Naive thymus-derived CD4-positive, alpha-beta T cell (primary cell): ENCODE measurements at regions of chr11 and their contacts with region 1.

Region 1: DNA sequence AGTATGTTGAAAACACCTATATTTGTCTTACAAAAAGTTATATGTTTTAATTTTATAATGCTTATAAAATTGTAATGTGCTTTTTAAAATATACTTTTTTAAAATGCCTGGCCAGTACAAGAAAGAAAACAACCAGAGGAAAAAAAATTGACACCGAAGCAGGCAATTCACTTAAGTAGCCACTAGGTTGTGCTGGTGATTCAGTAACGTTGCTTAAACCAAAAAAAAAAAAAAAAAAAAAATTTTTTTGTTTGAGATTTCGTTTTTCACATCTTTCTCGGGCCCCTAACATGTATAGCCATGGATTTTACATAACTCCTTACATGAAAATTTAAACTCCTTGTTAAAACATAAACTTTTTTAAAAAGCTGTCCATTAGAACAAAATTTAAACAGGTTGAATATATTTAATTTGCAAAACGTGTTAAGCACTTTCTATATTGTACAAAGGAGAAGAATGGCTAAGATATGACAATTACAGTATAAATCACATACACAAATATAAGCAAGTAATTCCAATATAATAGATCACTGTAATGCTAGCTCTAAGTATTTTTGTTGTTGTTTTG is 9.2 kb downstream of the OR8B4 start:
- DNase-seq: peak in 3 of 9 donors; percentile 0 to 11 (median 2)
- ATAC-seq: no peak
- H3K4me3 ChIP-seq: no peak overlapping the region
- H3K4me3 Mint-ChIP-seq: no peak overlapping the region
- H3K27ac ChIP-seq: no peak overlapping the region
- H3K27ac Mint-ChIP-seq: no peak overlapping the region
- H3K4me1 ChIP-seq: no peaks in the 10 kb centered on the region
- H3K4me1 Mint-ChIP-seq: peaks cover 0 to 2% (median 0%) of the 10 kb centered on the region in 7 donors
- H3K27me3 ChIP-seq: no peaks in the 10 kb centered on the region
- H3K27me3 Mint-ChIP-seq: peaks cover 6 to 35% (median 26%) of the 10 kb centered on the region in 5 donors

Region 2: DNA sequence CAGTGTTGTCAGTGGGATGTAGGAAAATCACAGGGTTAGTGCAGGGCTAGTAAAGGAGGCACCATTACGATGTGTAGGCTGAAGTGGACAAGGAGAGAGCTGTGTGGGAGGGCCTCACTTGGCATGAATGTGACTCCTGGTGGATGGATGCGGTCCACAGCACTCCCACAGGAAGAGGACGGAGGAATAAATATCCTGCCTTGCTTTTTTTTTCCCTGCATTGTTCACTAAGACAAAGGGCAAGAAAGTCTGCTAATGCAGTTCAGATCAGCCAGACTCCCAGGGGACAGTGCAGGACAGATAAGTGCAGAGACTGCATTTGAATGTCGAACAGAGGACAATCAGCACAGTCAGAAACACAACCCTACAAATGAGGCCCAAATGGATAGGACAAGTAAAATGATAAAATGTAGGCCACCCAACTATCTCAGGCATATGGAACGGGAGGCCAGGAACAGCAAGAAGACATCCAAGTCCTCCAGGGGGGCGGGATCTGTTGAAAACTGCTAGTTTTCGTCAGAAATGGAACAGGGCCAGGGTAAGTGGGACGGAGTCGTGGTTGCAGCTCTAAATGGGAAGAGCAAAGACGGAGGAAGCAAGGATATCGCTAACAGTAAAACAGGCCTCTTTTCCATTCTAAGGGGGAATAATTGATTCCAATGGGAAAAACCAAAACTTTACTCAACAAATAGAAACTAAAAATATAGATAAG is 55.2 kb after region 1 on chr11:
- CTCF ChIA-PET with region 1: no interaction called
- POLR2A ChIA-PET with region 1: no interaction called
- intact Hi-C with region 1: no loop called
- DNase-seq: no peak
- ATAC-seq: no peak
- H3K4me3 ChIP-seq: no peak overlapping the region
- H3K4me3 Mint-ChIP-seq: no peak overlapping the region
- H3K27ac ChIP-seq: no peak overlapping the region
- H3K27ac Mint-ChIP-seq: no peak overlapping the region
- H3K4me1 ChIP-seq: no peaks in the 10 kb centered on the region
- H3K4me1 Mint-ChIP-seq: no peaks in the 10 kb centered on the region
- H3K27me3 ChIP-seq: no peaks in the 10 kb centered on the region
- H3K27me3 Mint-ChIP-seq: peaks cover 5 to 39% (median 13%) of the 10 kb centered on the region in 5 donors

Region 3: DNA sequence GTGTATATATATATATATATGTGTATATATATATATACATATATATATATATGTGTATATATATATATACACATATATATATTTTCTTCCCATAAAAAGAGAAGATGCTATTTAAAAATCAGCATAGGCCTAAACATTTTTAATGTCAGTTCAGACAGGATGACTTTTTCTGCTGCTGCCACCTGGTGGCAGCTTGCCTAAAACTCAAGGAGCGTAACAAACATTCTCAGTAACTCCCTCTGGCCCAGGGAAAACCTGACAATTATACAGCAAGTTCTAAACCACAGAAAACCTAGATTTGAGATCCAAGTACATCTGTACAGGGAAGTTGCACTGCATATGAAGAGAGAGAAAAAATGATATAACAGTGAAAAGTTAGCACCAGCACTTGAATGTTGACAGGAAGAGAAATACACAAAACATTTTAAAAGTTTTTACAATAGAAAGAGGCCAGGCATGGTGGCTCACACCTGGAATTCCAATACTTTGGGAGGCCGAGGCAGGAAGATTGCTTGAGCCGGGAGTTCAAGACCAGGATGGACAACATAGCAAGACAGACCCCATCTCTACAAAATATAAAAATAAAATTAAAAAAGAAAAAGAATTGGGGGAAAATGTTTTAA is 170.9 kb after region 1 on chr11:
- CTCF ChIA-PET with region 1: interaction called, 3 read pairs
- POLR2A ChIA-PET with region 1: no interaction called
- intact Hi-C with region 1: loop called (anchors 1 kb)
- DNase-seq: peak in 7 of 9 donors; percentile 7 to 35 (median 24)
- ATAC-seq: peak; percentile 45
- H3K4me3 ChIP-seq: no peak overlapping the region
- H3K4me3 Mint-ChIP-seq: no peak overlapping the region
- H3K27ac ChIP-seq: no peak overlapping the region
- H3K27ac Mint-ChIP-seq: no peak overlapping the region
- H3K4me1 ChIP-seq: no peaks in the 10 kb centered on the region
- H3K4me1 Mint-ChIP-seq: peaks cover 0 to 2% (median 0%) of the 10 kb centered on the region in 7 donors
- H3K27me3 ChIP-seq: no peaks in the 10 kb centered on the region
- H3K27me3 Mint-ChIP-seq: peaks cover 17 to 39% (median 27%) of the 10 kb centered on the region in 5 donors

Region 4: DNA sequence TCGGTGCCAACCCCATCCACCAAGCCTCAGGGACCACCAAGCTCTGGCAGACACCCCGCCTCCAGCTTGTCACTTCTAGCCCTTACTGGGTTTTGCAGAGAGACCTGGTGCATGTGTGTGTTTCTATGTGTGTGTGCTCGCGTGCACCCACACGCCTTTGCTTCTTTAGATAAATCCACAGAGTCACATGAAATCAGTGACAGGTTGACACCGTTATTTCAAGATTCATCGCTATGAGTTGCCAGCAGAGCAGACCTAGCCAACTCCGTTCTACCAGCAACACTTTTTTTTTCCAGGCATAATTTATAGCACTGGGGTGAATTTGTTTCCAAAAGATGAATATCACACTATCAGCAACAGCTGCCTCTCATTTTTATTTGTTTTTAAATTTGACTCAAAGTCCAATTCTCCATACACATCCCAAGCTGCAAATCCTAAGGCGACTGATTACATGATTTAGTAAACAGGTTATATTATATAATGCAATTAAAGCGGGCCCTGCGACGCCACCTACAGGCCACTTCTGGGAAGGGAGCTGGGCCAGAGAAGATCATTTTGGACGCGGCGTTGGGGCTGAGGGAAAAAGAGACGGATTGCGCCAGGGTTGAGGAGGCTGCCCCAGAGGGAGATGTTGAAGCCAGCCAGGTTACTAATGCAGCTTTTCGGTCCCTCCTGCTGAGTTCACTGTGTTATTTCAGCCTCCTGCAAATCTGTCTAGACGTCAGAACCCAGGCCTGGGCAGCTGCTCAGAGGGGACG is 930.2 kb after region 1 on chr11:
- CTCF ChIA-PET with region 1: no interaction called
- POLR2A ChIA-PET with region 1: no interaction called
- intact Hi-C with region 1: loop called in 1 of 2 experiments (anchors 5 kb)
- DNase-seq: peak in 6 of 9 donors; percentile 17 to 29 (median 22)
- ATAC-seq: peak; percentile 45
- H3K4me3 ChIP-seq: no peak overlapping the region
- H3K4me3 Mint-ChIP-seq: no peak overlapping the region
- H3K27ac ChIP-seq: no peak overlapping the region
- H3K27ac Mint-ChIP-seq: no peak overlapping the region
- H3K4me1 ChIP-seq: no peaks in the 10 kb centered on the region
- H3K4me1 Mint-ChIP-seq: peaks cover 0 to 3% (median 0%) of the 10 kb centered on the region in 7 donors
- H3K27me3 ChIP-seq: no peaks in the 10 kb centered on the region
- H3K27me3 Mint-ChIP-seq: peaks cover 5 to 24% (median 10%) of the 10 kb centered on the region in 5 donors